Heart left ventricle (tissue), 16 donors: ENCODE measurements at regions of chr20 and their contacts with region 1.

Region 1: GRCh38 chr20:15179781-15180180 is 842.4 kb upstream of the FLRT3 start:
- DNase-seq: no peak
- ATAC-seq: no peak
- H3K4me3 ChIP-seq: no peak overlapping the region
- H3K27ac ChIP-seq: no peak overlapping the region
- H3K4me1 ChIP-seq: no peaks in the 10 kb centered on the region
- H3K27me3 ChIP-seq: no peaks in the 10 kb centered on the region
- CTCF ChIP-seq: no peak
- POLR2A ChIP-seq: no peak

Region 2: DNA sequence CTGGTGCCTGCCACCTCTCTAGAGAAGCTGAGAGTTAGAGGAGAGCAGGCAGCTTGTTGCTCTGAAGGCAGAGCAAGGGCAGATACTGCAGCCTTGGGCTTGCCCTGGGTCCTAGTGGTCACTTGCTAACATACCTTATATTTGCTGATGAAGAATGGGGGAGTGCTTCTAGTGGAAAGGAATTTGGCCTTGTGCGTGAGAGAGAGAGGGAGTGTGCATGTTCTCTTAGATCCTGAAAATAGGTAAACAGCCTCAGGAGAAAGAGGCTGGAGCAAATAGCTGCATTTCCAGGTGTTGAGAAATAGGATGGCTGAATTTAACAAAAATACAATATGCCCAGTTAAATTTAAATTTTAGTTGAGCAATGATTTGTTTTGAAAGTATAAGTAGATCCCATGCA is 117.8 kb before region 1 on chr20:
- intact Hi-C with region 1: no loop called
- DNase-seq: no peak
- ATAC-seq: no peak
- H3K4me3 ChIP-seq: no peak overlapping the region
- H3K27ac ChIP-seq: no peak overlapping the region
- H3K4me1 ChIP-seq: no peaks in the 10 kb centered on the region
- H3K27me3 ChIP-seq: no peaks in the 10 kb centered on the region
- CTCF ChIP-seq: no peak
- POLR2A ChIP-seq: no peak

Region 3: GRCh38 chr20:15236812-15237211 is 57.0 kb after region 1 on chr20:
- intact Hi-C with region 1: loop called in 1 of 10 experiments (anchors 10 kb)
- DNase-seq: no peak
- ATAC-seq: no peak
- H3K4me3 ChIP-seq: no peak overlapping the region
- H3K27ac ChIP-seq: no peak overlapping the region
- H3K4me1 ChIP-seq: no peaks in the 10 kb centered on the region
- H3K27me3 ChIP-seq: no peaks in the 10 kb centered on the region
- CTCF ChIP-seq: peak in 2 of 12 donors; percentile 8 to 9
- POLR2A ChIP-seq: no peak